ENCODE measurements at regions of chr16 and their contacts with region 1.

Region 1: DNA sequence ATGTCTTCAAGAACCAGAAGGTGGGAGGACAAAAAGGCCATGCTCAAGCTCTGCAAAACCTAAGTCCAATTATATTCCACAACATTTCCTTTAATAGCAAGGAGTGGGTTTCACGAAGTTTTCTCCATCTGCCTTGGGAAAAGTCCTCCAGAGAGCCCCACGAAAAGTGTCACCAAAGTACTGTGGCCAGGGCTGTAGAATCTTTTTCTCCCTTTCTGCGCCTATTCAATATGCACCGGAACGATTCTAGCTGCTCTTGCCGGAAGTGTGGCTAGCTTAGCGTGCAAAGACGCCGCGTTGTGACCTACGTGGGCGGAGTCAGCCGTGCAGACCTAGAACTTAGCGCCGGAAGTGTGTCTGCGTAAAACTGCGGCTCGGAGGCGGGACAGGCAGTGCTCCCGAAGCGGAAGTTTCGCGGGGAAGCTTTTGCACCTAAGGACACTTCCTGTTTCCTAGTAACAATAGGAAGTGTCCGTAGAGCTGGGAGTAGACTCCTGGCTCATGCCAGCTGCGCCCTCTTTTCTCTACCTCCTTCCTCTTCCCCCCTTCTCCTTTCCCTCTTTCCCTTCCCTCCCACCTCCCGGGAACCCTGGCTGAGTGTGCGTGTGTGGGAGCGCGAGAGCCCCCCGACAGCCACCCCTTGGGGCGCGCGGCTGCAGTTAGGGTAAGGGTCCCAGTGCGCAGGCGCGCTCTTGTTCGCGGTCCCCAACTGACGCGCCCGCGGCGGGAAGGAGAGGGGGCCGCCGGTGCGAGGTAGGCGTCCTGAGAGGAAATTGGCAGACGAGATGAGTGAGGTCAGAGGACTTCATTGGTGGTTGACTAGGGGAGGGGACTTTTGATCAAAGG is at the starts of genes ZNF646 and ZNF668:
- DNase-seq: peak; percentile 99
- H3K4me3 ChIP-seq: peak within 1 kb of the TSS; percentile 68 to 87 (median 87)
- H3K27ac ChIP-seq: peak within 1 kb of the TSS; percentile 86
- H3K4me1 ChIP-seq: peaks cover 14% of the 10 kb centered on the region
- H3K27me3 ChIP-seq: no peaks in the 10 kb centered on the region
- CTCF ChIP-seq: no peak
- POLR2A ChIP-seq: peak; percentile 84
- total RNA-seq, gene ZNF646: 13.1 and 15.9 TPM in 2 replicates
- total RNA-seq, gene ZNF668: 11.6 and 13.3 TPM in 2 replicates

Region 2: DNA sequence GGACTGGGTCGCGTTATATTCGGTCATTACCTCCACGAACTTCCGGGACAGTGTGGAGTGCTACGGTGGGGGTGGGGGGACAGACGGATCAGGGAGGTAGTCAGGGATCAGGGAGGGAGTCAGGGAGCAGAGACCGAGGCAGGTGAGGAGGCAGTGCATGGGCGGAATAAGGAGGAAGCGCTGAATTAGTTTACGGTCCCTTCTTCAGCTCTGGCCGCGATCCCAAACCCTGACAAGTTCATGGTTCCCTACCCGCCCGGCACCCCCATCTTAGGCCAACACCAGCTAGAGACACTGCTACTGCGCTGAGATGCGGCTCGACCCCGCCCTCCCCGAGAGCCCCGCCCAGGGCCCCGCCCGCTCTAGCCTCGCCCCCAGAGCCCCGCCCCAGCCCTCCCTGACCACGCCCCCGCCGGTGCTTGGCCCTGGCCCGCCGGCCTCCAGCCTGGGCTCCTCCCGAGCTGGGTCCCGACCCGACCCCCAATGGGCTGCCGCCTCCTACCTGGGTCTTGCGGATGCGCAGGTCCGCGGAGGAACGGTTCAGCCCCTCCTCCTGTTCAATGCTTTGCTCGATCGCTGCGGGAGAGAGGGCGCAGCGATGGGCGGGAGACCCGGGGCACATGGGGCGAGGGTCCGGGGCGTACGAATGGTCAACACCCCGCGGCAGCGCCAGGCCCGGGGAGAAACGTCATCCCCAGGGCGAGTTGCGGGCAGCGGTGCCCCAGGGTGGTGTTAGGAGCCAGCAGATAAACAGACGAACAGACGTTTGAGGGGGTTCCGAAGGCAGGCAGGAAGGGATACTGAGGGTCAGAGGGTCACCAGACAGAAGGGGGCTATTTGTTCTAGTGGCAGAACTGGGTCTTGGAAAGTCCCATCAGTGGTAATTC is 76.9 kb before region 1 on chr16:
- CTCF ChIA-PET with region 1: no interaction called
- POLR2A ChIA-PET with region 1: no interaction called
- dilution Hi-C with region 1: no loop called
- intact Hi-C with region 1: loop called (anchors 2 kb)
- DNase-seq: peak; percentile 37
- H3K4me3 ChIP-seq: peak overlapping the region; percentile 32 to 50 (median 41)
- H3K27ac ChIP-seq: no peak overlapping the region
- H3K4me1 ChIP-seq: no peaks in the 10 kb centered on the region
- H3K27me3 ChIP-seq: no peaks in the 10 kb centered on the region
- CTCF ChIP-seq: no peak
- POLR2A ChIP-seq: no peak

Region 3: DNA sequence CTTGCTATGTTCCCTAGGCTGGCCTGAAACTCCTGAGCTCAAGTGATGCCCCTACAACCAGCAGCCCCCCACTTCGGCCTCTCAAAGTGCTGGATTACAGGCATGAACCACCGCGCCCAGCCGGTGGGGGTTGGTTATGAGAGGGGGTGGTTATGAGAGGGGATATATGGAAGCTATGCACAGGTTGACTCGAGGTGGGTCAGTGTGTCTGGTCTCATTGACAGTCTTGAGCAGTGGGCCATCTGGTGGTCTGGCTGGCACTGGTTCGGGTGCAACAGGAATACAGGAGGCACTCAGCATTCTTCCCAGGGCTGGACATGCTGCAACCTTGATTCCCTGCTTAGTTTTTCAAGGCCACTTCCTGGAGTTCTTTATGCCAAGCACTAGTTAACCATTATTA is 58.2 kb before region 1 on chr16:
- CTCF ChIA-PET with region 1: no interaction called
- POLR2A ChIA-PET with region 1: no interaction called
- dilution Hi-C with region 1: no loop called
- intact Hi-C with region 1: no loop called
- DNase-seq: no peak
- H3K4me3 ChIP-seq: no peak overlapping the region
- H3K27ac ChIP-seq: no peak overlapping the region
- H3K4me1 ChIP-seq: no peaks in the 10 kb centered on the region
- H3K27me3 ChIP-seq: peaks cover 5 to 13% of the 10 kb centered on the region in 2 experiments
- CTCF ChIP-seq: no peak
- POLR2A ChIP-seq: no peak

Region 4: DNA sequence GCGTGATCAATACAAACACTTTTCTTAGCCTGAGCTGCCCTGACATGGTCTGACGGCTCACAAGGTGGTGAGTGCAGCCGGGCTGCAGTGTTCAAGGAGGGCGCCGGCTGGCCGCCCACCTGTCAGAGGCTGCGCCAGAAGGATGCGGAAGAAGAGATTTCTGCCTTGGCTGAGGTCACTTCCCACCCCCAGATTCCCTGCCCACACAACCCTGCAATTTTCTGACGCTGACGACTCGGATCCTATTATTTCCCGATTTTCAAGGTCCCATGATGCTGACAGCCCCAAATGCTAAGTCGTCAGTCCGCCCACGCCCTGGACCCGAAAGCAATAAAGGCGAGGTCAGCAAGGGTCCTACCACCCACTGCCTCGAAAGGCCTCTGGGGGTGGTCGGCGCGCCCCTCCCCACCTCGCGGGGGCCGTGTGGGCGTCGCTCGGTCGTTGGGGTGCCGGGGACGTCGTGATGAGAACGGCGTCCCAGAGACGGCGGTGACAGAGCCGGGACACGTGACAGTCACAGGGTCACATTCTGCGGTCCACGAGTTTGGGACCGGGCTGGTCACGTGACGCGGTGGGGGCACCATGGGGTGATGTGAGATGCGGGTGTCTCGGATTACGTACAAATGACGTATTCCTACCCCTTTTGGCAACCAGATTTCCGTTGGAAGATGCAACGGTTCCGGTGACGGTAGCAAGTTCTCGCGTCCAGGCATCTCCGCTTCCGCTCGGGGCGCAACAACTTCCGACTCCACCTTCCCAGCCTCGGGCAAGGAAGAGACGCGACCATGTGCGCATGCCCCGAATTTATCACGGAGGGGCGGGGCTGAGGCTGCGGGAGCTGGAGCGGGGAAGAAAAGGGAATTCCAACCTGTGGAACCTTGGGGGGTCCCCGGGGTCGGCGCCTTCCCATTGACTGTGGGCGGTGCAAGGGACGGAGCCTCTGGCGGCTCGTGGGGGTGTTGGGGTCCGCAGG is 41.2 kb before region 1 on chr16 and contains the start of gene STX4:
- CTCF ChIA-PET with region 1: no interaction called
- POLR2A ChIA-PET with region 1: interaction called, 5 read pairs
- dilution Hi-C with region 1: no loop called
- intact Hi-C with region 1: loop called (anchors 1 kb)
- DNase-seq: peak; percentile 94
- H3K4me3 ChIP-seq: peak within 1 kb of the TSS; percentile 63 to 75 (median 71)
- H3K27ac ChIP-seq: peak within 1 kb of the TSS; percentile 85
- H3K4me1 ChIP-seq: peaks cover 11% of the 10 kb centered on the region
- H3K27me3 ChIP-seq: no peaks in the 10 kb centered on the region
- CTCF ChIP-seq: no peak
- POLR2A ChIP-seq: no peak
- total RNA-seq, gene STX4: 60.7 and 65.2 TPM in 2 replicates

Region 5: GRCh38 chr16:31063843-31064611 is 10.2 kb before region 1 on chr16:
- CTCF ChIA-PET with region 1: interaction called, 4 read pairs
- POLR2A ChIA-PET with region 1: no interaction called
- dilution Hi-C with region 1: no loop called
- intact Hi-C with region 1: loop called (anchors 2 kb)
- DNase-seq: no peak
- H3K4me3 ChIP-seq: no peak overlapping the region
- H3K27ac ChIP-seq: peak overlapping the region; percentile 63
- H3K4me1 ChIP-seq: peaks cover 10% of the 10 kb centered on the region
- H3K27me3 ChIP-seq: no peaks in the 10 kb centered on the region
- CTCF ChIP-seq: no peak
- POLR2A ChIP-seq: no peak

Region 6: DNA sequence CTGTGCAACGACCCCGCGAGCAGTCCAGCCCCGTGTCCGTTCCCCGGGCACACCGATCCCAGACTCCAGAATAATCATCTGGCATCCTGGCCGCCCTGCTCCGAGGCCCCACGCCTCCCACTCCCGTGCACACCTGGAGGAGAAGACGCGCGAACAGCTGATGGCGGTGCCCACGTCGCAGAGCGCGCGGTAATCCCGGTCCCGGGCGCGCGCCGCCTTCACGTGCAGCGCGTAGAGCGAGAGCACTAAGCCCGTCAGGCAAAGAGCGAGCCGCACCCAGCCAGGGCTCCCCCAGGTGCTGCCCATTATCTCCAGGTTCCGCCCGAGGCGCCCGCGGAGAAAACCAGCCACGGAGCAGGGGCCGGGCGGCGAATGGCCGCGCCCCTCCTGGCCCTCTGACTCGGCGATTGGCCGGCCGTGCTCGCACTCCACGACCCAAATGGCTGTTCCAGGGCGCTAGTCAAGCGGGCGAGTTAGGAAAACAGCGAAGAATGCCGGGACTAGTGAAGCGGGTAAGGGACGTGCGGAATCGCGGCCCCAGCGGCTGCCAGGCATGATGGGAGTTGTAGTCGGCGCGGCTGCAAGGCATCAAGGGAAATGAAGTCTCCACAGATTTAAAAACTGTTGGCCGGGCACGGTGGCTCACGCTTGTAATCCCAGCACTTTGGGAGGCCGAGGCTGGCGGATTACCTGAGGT is 20.4 kb after region 1 on chr16 and contains the start of gene VKORC1:
- CTCF ChIA-PET with region 1: interaction called, 9 read pairs
- POLR2A ChIA-PET with region 1: no interaction called
- dilution Hi-C with region 1: no loop called
- intact Hi-C with region 1: loop called (anchors 1 kb)
- DNase-seq: peak; percentile 97
- H3K4me3 ChIP-seq: peak within 1 kb of the TSS; percentile 28 to 91 (median 62)
- H3K27ac ChIP-seq: peak within 1 kb of the TSS; percentile 6
- H3K4me1 ChIP-seq: peaks cover 3% of the 10 kb centered on the region
- H3K27me3 ChIP-seq: no peaks in the 10 kb centered on the region
- CTCF ChIP-seq: no peak
- POLR2A ChIP-seq: peak; percentile 64
- total RNA-seq, gene VKORC1: 91.8 and 93.5 TPM in 2 replicates

Region 7: DNA sequence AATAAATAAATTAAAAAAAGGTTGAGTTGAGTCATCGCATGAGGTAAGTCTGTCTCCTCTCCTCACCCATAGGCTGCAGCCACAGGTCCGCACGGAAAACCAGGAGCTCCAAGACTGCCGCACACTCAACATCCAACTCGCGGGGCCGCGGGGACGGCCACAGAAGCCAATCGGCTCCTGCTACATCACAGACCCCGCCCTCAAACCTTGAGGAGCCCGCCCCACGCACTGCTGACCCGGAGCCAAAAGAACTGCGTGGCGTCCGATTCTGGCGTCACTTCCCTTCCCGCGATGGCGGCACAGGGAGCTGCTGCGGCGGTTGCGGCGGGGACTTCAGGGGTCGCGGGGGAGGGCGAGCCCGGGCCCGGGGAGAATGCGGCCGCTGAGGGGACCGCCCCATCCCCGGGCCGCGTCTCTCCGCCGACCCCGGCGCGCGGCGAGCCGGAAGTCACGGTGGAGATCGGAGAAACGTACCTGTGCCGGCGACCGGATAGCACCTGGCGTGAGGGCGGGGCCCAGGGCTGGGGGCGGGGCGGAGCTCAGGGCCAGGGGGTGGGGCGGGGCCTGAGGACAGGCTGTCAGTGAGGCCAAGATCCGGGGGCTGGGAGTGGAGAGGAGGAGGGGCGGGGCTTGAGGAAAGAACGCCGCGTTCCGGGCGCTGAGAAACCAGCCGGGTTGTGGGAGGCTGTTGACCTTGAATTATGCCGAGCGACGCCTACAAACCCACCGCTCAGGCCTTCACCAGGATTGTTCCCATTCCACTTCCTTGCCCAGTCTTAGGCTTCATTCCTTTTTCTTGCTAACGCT is 43.4 kb after region 1 on chr16 and contains the start of gene KAT8:
- CTCF ChIA-PET with region 1: no interaction called
- POLR2A ChIA-PET with region 1: no interaction called
- dilution Hi-C with region 1: no loop called
- intact Hi-C with region 1: loop called (anchors 1 kb)
- DNase-seq: peak; percentile 98
- H3K4me3 ChIP-seq: peak within 1 kb of the TSS; percentile 54 to 79 (median 79)
- H3K27ac ChIP-seq: peak within 1 kb of the TSS; percentile 77
- H3K4me1 ChIP-seq: peaks cover 7% of the 10 kb centered on the region
- H3K27me3 ChIP-seq: no peaks in the 10 kb centered on the region
- CTCF ChIP-seq: no peak
- POLR2A ChIP-seq: peak; percentile 84
- total RNA-seq, gene KAT8: 42.1 and 42.8 TPM in 2 replicates

Region 8: GRCh38 chr16:31179747-31180459 is 105.7 kb after region 1 on chr16 and contains the start of gene FUS:
- CTCF ChIA-PET with region 1: no interaction called
- POLR2A ChIA-PET with region 1: interaction called, 9 read pairs
- dilution Hi-C with region 1: no loop called
- intact Hi-C with region 1: loop called (anchors 1 kb)
- DNase-seq: peak; percentile 90
- H3K4me3 ChIP-seq: peak within 1 kb of the TSS; percentile 77 to 100 (median 95)
- H3K27ac ChIP-seq: peak within 1 kb of the TSS; percentile 91
- H3K4me1 ChIP-seq: peaks cover 22% of the 10 kb centered on the region
- H3K27me3 ChIP-seq: no peaks in the 10 kb centered on the region
- CTCF ChIP-seq: no peak
- POLR2A ChIP-seq: peak; percentile 100
- total RNA-seq, gene FUS: 569 and 574 TPM in 2 replicates

Region 9: GRCh38 chr16:31693733-31694132 is 619.5 kb after region 1 on chr16:
- CTCF ChIA-PET with region 1: no interaction called
- POLR2A ChIA-PET with region 1: no interaction called
- dilution Hi-C with region 1: no loop called
- intact Hi-C with region 1: no loop called
- DNase-seq: no peak
- H3K4me3 ChIP-seq: no peak overlapping the region
- H3K27ac ChIP-seq: no peak overlapping the region
- H3K4me1 ChIP-seq: no peaks in the 10 kb centered on the region
- H3K27me3 ChIP-seq: peaks cover 2 to 3% of the 10 kb centered on the region in 2 experiments
- CTCF ChIP-seq: no peak
- POLR2A ChIP-seq: no peak

Measured in endothelial cell of umbilical vein (primary cell).